ENCODE measurements at regions of chr1 and their contacts with region 1.

Region 1: DNA sequence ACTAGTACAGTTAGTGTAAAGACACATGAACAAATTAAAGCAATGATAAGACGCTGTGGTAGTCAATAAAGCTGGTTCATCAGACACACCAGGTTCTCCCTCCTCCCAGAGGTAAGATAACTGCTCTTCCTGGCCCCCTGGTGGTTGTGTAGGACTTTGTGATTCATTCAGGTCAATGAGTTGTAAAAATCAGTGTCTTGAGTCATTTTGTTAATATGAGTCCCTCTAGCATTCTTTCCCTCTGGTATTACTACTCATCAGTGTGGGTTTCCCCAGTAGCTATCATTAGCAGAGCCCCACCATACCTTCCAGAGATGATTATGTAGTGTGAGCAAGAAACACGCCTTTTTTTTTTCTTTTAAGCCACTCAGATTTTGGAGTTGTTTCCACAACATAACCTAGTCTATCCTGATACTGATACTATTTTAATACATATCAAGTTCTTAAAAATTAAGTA is 3.6 kb upstream of the SETDB1 start:
- DNase-seq: peak; percentile 93
- ATAC-seq: peak; percentile 63
- H3K4me3 ChIP-seq: no peak overlapping the region
- H3K27ac ChIP-seq: no peak overlapping the region
- H3K4me1 ChIP-seq: peaks cover 2% of the 10 kb centered on the region; the same call in 1 of the 2 replicates
- H3K27me3 ChIP-seq: no peaks in the 10 kb centered on the region
- CTCF ChIP-seq: peak; percentile 86
- POLR2A ChIP-seq: no peak
- RAD21 ChIP-seq: peak; percentile 76

Region 2: GRCh38 chr1:150836129-150836773 is 86.3 kb before region 1 on chr1:
- CTCF ChIA-PET with region 1: no interaction called
- POLR2A ChIA-PET with region 1: no interaction called
- dilution Hi-C with region 1: no loop called
- in situ Hi-C with region 1: no loop called
- intact Hi-C with region 1: loop called (anchors 5 kb)
- DNase-seq: peak; percentile 3
- ATAC-seq: no peak
- H3K4me3 ChIP-seq: no peak overlapping the region
- H3K27ac ChIP-seq: no peak overlapping the region
- H3K4me1 ChIP-seq: no peaks in the 10 kb centered on the region; the same call in 1 of the 2 replicates
- H3K27me3 ChIP-seq: no peaks in the 10 kb centered on the region
- CTCF ChIP-seq: no peak
- POLR2A ChIP-seq: no peak
- RAD21 ChIP-seq: no peak

Region 3: GRCh38 chr1:150876119-150876454 is 46.5 kb before region 1 on chr1:
- CTCF ChIA-PET with region 1: interaction called, 4 read pairs
- POLR2A ChIA-PET with region 1: interaction called, 4 read pairs
- dilution Hi-C with region 1: no loop called
- in situ Hi-C with region 1: no loop called
- intact Hi-C with region 1: loop called (anchors 1 kb)
- DNase-seq: peak; percentile 49
- ATAC-seq: peak; percentile 64
- H3K4me3 ChIP-seq: peak overlapping the region; percentile 77
- H3K27ac ChIP-seq: peak overlapping the region; percentile 94
- H3K4me1 ChIP-seq: peaks cover 11% of the 10 kb centered on the region
- H3K27me3 ChIP-seq: no peaks in the 10 kb centered on the region
- CTCF ChIP-seq: no peak
- POLR2A ChIP-seq: no peak; the same call in 1 of the 2 replicates
- RAD21 ChIP-seq: peak; percentile 8; the same call in 1 of the 2 replicates

Region 4: DNA sequence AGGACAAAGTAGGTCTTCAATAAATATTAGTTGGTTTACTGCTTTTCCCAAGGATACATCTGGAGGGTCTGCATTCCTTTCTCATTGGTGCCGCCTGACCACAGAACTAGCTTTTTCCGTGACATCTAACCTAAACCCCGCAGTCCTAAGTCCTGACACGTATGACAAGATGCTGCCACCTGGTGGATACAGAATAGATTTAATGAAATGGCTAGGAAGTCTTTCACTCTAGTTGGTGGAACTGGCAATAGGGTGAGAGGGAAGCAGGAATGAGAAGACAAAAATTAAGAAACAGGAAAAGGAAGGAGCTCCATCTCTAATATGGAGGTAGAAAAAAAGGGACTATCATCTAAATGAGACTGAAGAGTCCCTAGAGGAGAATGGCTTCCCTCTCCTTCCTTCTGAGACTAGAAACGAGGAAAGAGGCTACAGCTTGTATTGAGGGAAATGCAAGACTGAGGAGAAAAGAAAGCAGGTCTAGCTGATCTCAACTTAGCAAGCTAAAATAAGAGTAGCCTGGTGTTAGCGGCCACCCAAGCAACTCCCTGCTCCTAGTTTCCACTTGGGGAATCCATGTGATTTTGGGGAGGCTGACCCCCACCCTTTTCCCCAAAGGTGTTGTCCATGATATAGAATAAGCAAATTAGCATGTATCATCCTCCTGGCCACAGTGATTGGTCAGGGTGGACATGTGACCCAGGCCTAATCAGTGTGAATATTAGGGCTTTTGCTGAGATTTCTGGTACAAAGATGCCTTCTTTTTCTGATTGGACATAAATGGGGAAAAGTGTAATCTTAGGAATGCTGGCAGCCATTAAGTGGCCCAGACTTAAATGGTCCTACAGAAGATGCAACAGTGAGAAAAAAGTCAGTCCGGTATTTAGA is 418.6 kb after region 1 on chr1:
- CTCF ChIA-PET with region 1: no interaction called
- POLR2A ChIA-PET with region 1: no interaction called
- dilution Hi-C with region 1: no loop called
- in situ Hi-C with region 1: no loop called
- intact Hi-C with region 1: no loop called
- DNase-seq: peak; percentile 86
- ATAC-seq: peak; percentile 96
- H3K4me3 ChIP-seq: no peak overlapping the region
- H3K27ac ChIP-seq: no peak overlapping the region
- H3K4me1 ChIP-seq: peaks cover 2% of the 10 kb centered on the region
- H3K27me3 ChIP-seq: no peaks in the 10 kb centered on the region
- CTCF ChIP-seq: peak; percentile 85
- POLR2A ChIP-seq: no peak
- RAD21 ChIP-seq: peak; percentile 85